ENCODE measurements at regions of chr18 and their contacts with region 1.

Region 1: GRCh38 chr18:62131301-62131909 is 55.5 kb downstream of the PIGN start:
- DNase-seq: peak; percentile 21
- H3K4me3 Mint-ChIP-seq: no peak overlapping the region
- H3K27ac Mint-ChIP-seq: no peak overlapping the region
- H3K4me1 Mint-ChIP-seq: peaks cover 7% of the 10 kb centered on the region
- H3K27me3 Mint-ChIP-seq: no peaks in the 10 kb centered on the region

Region 2: GRCh38 chr18:61322265-61322873 is 809.0 kb before region 1 on chr18:
- intact Hi-C with region 1: loop called (anchors 10 kb)
- DNase-seq: peak; percentile 16
- H3K4me3 Mint-ChIP-seq: no peak overlapping the region
- H3K27ac Mint-ChIP-seq: no peak overlapping the region
- H3K4me1 Mint-ChIP-seq: no peaks in the 10 kb centered on the region
- H3K27me3 Mint-ChIP-seq: no peaks in the 10 kb centered on the region

Region 3: DNA sequence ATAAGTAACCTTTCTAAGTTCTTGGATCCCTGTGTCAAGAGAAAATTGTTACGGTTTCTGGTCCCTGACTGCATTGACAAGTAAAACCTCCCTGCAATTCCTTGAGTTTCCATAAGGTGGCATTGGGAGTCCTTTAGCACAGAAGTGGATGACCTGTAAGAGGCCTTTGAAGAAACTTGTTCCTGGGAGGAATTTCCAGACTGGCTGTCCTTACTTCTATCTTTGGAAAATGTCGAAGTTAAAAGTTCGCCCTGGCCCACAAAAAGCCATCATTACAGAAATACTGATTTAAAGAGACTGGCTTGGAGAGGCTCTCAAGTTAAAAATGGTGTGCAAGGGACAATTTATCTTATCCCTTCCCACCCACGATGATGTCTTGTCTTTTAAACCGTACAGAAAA is 579.8 kb before region 1 on chr18:
- intact Hi-C with region 1: loop called (anchors 10 kb)
- DNase-seq: no peak
- H3K4me3 Mint-ChIP-seq: no peak overlapping the region
- H3K27ac Mint-ChIP-seq: no peak overlapping the region
- H3K4me1 Mint-ChIP-seq: peaks cover 4% of the 10 kb centered on the region
- H3K27me3 Mint-ChIP-seq: peaks cover 8% of the 10 kb centered on the region

Region 4: DNA sequence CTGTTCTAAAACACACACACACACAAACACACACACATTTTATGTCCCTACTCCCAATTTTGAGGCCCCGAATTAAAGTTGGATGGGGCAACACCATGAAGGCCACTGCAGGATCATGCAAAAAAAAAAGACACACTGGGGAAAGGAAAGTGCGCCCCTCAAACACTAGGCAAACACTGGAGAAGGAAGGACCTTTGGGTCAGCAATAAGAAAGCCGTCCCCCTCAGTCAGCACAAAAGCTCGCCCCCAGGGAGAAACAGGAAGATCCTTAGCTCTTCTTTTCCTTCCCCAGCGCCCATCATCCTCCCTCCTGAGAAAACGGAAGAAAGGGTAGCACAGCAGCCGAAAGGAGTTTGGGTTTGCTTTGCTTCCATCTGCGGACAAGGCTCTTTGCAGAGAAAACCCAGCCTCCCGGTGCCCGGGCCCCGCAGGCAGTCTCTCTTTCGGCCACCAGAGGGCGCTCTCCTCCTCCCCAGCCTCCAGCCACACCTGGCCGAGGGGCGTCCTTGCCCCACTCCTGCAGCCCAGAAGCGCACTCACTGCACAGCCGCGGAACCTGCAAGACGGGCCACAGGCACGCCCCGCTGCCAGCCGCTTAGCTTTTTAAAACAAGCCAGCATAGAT is 549.7 kb before region 1 on chr18:
- intact Hi-C with region 1: loop called (anchors 1 kb)
- DNase-seq: peak; percentile 49
- H3K4me3 Mint-ChIP-seq: no peak overlapping the region
- H3K27ac Mint-ChIP-seq: no peak overlapping the region
- H3K4me1 Mint-ChIP-seq: peaks cover 2% of the 10 kb centered on the region
- H3K27me3 Mint-ChIP-seq: peaks cover 32% of the 10 kb centered on the region

Region 5: DNA sequence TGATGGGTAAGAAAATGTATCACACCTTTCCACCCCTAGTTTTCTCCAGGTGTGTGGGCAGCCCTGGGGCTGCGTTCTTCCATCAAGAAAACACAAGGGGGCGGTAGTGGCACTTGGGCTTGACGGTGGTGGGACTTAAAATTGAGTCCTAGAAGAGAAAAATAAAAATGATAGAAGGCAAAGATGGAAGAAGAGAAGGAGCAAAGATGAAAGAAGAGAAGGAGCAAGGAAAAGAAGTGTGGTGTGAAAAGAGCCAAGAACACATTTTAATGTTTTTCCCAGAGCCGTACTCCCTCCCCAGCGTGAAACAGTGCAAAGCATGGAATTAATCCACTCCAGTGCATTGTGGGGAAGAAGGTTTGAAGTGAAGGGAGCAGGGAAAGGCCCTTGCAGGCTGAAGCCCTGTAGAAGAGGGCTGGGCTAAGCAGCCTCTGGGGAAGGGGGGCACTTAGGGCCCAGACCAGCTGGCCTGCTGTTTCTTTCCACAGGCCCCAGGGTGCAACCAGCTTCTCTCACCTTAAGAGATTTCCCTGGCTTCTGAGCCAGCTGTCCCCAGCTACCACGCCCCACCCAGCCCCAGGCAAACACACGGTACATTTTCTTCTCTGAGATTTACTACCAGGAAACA is 495.4 kb before region 1 on chr18:
- intact Hi-C with region 1: loop called (anchors 1 kb)
- DNase-seq: no peak
- H3K4me3 Mint-ChIP-seq: no peak overlapping the region
- H3K27ac Mint-ChIP-seq: no peak overlapping the region
- H3K4me1 Mint-ChIP-seq: no peaks in the 10 kb centered on the region
- H3K27me3 Mint-ChIP-seq: peaks cover 7% of the 10 kb centered on the region

Region 6: GRCh38 chr18:61893971-61894750 is 237.2 kb before region 1 on chr18:
- intact Hi-C with region 1: loop called (anchors 5 kb)
- DNase-seq: peak; percentile 54
- H3K4me3 Mint-ChIP-seq: peak overlapping the region; percentile 79
- H3K27ac Mint-ChIP-seq: no peak overlapping the region
- H3K4me1 Mint-ChIP-seq: peaks cover 8% of the 10 kb centered on the region
- H3K27me3 Mint-ChIP-seq: peaks cover 74% of the 10 kb centered on the region

Region 7: GRCh38 chr18:62030091-62030985 is 101.1 kb before region 1 on chr18:
- intact Hi-C with region 1: loop called (anchors 5 kb)
- DNase-seq: no peak
- H3K4me3 Mint-ChIP-seq: no peak overlapping the region
- H3K27ac Mint-ChIP-seq: no peak overlapping the region
- H3K4me1 Mint-ChIP-seq: peaks cover 37% of the 10 kb centered on the region
- H3K27me3 Mint-ChIP-seq: peaks cover 33% of the 10 kb centered on the region

Region 8: DNA sequence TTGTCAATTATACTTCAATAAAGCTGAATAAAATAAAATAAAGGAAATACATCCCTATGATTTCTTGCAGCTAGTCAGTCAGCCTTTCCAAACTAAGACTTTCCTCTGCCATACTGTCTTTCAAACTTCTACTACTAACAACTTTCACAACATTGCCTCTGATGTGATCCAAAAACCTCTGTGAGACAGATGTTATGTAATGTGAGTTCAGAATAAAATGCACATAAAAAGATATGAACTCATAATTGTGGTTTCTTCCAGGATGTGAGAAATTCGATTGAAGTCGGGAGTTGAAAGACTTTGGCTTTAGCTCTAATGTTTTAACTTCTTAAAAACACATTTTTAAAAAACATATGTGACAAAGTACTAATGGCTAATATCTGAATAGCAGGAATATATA is 43.2 kb before region 1 on chr18:
- intact Hi-C with region 1: no loop called
- DNase-seq: no peak
- H3K4me3 Mint-ChIP-seq: no peak overlapping the region
- H3K27ac Mint-ChIP-seq: no peak overlapping the region
- H3K4me1 Mint-ChIP-seq: peaks cover 9% of the 10 kb centered on the region
- H3K27me3 Mint-ChIP-seq: no peaks in the 10 kb centered on the region

Measured in activated T-helper 2 cell treated with anti-CD3 and anti-CD28 coated beads, Interferon-gamma antibody, Interleukin-2, Interleukin-4, amounts not matched to agents 10 μg/mL and 5 μg/mL and 100 μg/mL, durations not matched to agents 14 hours and 24 hours and 36 hours (primary cell).